ENCODE measurements at regions of chrX and their contacts with region 1.

Region 1: GRCh38 chrX:45849253-45849862 is 648.7 kb upstream of the DIPK2B start:
- DNase-seq: peak; percentile 56 to 85
- H3K4me3 ChIP-seq: peak overlapping the region; percentile 72
- H3K4me1 ChIP-seq: peaks cover 28% of the 10 kb centered on the region
- H3K27me3 ChIP-seq: no peaks in the 10 kb centered on the region

Region 2: GRCh38 chrX:45515262-45516215 is 333.8 kb before region 1 on chrX:
- in situ Hi-C with region 1: loop called (anchors 25 kb)
- DNase-seq: peak; percentile 50 to 63
- H3K4me3 ChIP-seq: no peak overlapping the region
- H3K4me1 ChIP-seq: peaks cover 3% of the 10 kb centered on the region; the same call in 1 of the 2 replicates
- H3K27me3 ChIP-seq: no peaks in the 10 kb centered on the region

Region 3: DNA sequence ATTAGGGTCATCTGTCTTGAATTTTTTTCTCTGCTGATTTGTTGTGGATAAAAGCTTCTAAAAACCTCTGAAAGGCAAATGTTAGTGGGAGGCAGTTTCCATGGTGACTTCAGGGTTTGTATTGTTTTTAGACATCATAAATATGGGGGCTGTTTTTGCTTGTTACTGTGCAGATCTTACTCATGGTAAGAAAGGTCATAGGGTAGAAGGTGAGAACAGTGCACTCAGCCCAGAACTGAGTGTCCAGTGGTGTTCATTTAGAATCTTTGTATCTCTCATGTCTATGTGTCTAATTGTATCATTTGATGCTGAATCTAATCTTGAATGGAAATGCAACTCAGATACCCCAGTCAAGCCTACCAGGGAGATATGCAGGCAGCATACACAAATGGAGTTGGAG is 86.0 kb after region 1 on chrX:
- in situ Hi-C with region 1: no loop called
- DNase-seq: no peak
- H3K4me3 ChIP-seq: no peak overlapping the region
- H3K4me1 ChIP-seq: no peaks in the 10 kb centered on the region
- H3K27me3 ChIP-seq: no peaks in the 10 kb centered on the region

Region 4: DNA sequence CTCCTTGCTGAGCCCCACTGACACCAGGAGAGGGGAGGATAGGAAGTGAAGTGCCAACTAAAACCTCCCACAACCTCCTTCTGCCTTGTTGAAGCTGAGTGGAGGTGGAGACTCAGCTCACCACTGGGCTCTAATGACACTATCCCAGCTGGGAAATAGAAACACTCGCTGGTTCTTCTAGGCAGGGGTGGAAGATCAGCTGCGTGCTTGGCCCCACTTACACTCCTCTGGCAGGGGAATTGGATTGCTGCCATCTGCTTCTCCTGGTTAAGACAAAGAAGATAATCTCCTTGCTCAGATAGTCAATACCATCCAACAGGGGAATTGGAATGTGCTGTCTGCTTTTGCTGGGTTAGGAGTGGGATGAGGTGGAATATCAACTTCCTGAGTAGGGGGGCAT is 303.4 kb after region 1 on chrX:
- in situ Hi-C with region 1: no loop called
- DNase-seq: no peak
- H3K4me3 ChIP-seq: no peak overlapping the region
- H3K4me1 ChIP-seq: 0 out of 2 replicates have a peak, but pooled peaks cover 4% of the 10 kb centered on the region
- H3K27me3 ChIP-seq: no peaks in the 10 kb centered on the region

Region 5: GRCh38 chrX:46208225-46208854 is 359.0 kb after region 1 on chrX:
- in situ Hi-C with region 1: no loop called
- DNase-seq: no peak
- H3K4me3 ChIP-seq: no peak overlapping the region
- H3K4me1 ChIP-seq: peaks cover 20% of the 10 kb centered on the region
- H3K27me3 ChIP-seq: no peaks in the 10 kb centered on the region

Region 6: GRCh38 chrX:46366381-46367207 is 517.2 kb after region 1 on chrX:
- in situ Hi-C with region 1: loop called (anchors 25 kb)
- DNase-seq: peak; percentile 35 to 87
- H3K4me3 ChIP-seq: no peak overlapping the region
- H3K4me1 ChIP-seq: peaks cover 28% of the 10 kb centered on the region
- H3K27me3 ChIP-seq: no peaks in the 10 kb centered on the region